ENCODE measurements at regions of chr9 and their contacts with region 1.

Region 1: GRCh38 chr9:5949103-5949699 is 58.5 kb downstream of the MLANA start:
- DNase-seq: peak in 1 of 2 donors; percentile 57
- ATAC-seq: peak; percentile 74 to 80 (median 78)
- H3K4me3 ChIP-seq: peak overlapping the region; percentile 16
- H3K4me3 Mint-ChIP-seq: peak overlapping the region; percentile 81
- H3K27ac ChIP-seq: peak overlapping the region; percentile 45
- H3K27ac Mint-ChIP-seq: peak overlapping the region; percentile 75 to 81
- H3K4me1 ChIP-seq: peaks cover 2% of the 10 kb centered on the region
- H3K4me1 Mint-ChIP-seq: peaks cover 23 to 31% of the 10 kb centered on the region in 2 donors
- H3K27me3 ChIP-seq: no peaks in the 10 kb centered on the region
- H3K27me3 Mint-ChIP-seq: no peaks in the 10 kb centered on the region
- CTCF ChIP-seq: no peak

Region 2: GRCh38 chr9:5536684-5537083 is 412.5 kb before region 1 on chr9:
- intact Hi-C with region 1: no loop called
- DNase-seq: no peak
- ATAC-seq: no peak
- H3K4me3 ChIP-seq: no peak overlapping the region
- H3K4me3 Mint-ChIP-seq: no peak overlapping the region
- H3K27ac ChIP-seq: no peak overlapping the region
- H3K27ac Mint-ChIP-seq: no peak overlapping the region
- H3K4me1 ChIP-seq: no peaks in the 10 kb centered on the region
- H3K4me1 Mint-ChIP-seq: peaks cover 4% of the 10 kb centered on the region in 2 donors
- H3K27me3 ChIP-seq: no peaks in the 10 kb centered on the region
- H3K27me3 Mint-ChIP-seq: peaks cover 0 to 10% of the 10 kb centered on the region in 2 donors
- CTCF ChIP-seq: no peak

Region 3: DNA sequence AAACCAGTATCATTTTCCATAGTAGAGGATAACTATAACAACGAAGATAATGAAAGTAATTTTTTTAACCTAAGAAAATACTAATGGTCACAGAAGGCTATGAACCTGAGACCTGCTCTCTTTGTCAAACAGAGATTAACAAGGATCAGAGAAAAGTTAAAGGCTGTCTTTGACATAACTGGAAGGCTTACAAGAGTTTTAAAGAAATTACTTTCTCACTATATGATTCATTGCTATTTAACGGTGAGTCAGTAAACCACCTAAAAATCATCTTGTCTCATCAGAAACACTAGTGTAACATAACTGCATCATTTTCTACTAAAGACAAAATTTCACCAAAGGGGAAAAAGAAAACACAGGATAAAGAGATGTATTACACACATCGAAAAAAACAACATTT is 39.2 kb before region 1 on chr9:
- intact Hi-C with region 1: no loop called
- DNase-seq: no peak
- ATAC-seq: no peak
- H3K4me3 ChIP-seq: no peak overlapping the region
- H3K4me3 Mint-ChIP-seq: no peak overlapping the region
- H3K27ac ChIP-seq: no peak overlapping the region
- H3K27ac Mint-ChIP-seq: no peak overlapping the region
- H3K4me1 ChIP-seq: no peaks in the 10 kb centered on the region
- H3K4me1 Mint-ChIP-seq: peaks cover 0 to 6% of the 10 kb centered on the region in 2 donors
- H3K27me3 ChIP-seq: no peaks in the 10 kb centered on the region
- H3K27me3 Mint-ChIP-seq: no peaks in the 10 kb centered on the region
- CTCF ChIP-seq: no peak

Region 4: DNA sequence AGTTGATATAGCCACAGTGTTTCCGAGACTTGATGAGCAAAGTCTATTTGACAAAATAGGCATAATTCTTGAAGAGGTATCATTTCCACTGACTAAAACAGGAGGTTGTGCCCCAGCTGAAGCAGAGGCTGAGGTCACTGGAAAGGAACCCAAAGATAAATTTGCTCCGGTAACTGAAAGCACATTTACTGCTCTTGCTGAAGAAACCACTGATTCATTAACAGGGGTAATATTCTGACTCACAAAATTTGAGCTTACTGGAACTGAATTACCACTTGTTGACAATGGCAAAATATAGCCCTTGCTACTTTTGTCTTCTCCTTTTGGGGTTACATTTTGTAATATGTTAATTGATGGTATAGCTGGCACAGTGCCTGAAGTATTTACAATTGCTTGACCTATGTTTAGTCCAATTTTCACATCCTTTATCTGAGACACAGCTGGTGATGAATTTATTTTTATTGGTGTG is 28.3 kb before region 1 on chr9:
- intact Hi-C with region 1: loop called (anchors 2 kb)
- DNase-seq: no peak
- ATAC-seq: peak in 1 of 3 donors; percentile 25
- H3K4me3 ChIP-seq: no peak overlapping the region
- H3K4me3 Mint-ChIP-seq: peak overlapping the region; percentile 73
- H3K27ac ChIP-seq: no peak overlapping the region
- H3K27ac Mint-ChIP-seq: peak overlapping the region; percentile 77 to 81
- H3K4me1 ChIP-seq: peaks cover 19% of the 10 kb centered on the region
- H3K4me1 Mint-ChIP-seq: peaks cover 45 to 46% of the 10 kb centered on the region in 2 donors
- H3K27me3 ChIP-seq: no peaks in the 10 kb centered on the region
- H3K27me3 Mint-ChIP-seq: no peaks in the 10 kb centered on the region
- CTCF ChIP-seq: no peak

Region 5: DNA sequence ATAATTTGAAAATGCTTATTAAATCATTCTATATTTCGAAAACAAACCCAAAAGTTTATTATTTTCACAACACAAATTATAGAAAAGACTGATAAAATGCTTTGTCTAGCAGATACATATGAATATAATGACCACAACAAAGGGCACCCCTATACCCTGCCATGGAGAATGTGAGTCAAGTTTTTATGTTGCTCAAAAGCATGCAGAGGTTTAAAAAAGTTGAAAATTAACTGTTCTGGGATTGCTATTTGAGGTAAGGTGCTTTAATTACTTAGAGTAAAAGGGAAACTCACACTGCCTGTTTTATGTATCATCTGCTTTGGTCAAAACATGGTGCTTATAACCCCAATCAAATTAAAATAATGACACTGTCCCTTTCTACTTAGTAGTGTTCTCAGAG is 17.5 kb before region 1 on chr9:
- intact Hi-C with region 1: no loop called
- DNase-seq: no peak
- ATAC-seq: no peak
- H3K4me3 ChIP-seq: no peak overlapping the region
- H3K4me3 Mint-ChIP-seq: no peak overlapping the region
- H3K27ac ChIP-seq: no peak overlapping the region
- H3K27ac Mint-ChIP-seq: no peak overlapping the region
- H3K4me1 ChIP-seq: no peaks in the 10 kb centered on the region
- H3K4me1 Mint-ChIP-seq: no peaks in the 10 kb centered on the region
- H3K27me3 ChIP-seq: no peaks in the 10 kb centered on the region
- H3K27me3 Mint-ChIP-seq: no peaks in the 10 kb centered on the region
- CTCF ChIP-seq: no peak

Region 6: DNA sequence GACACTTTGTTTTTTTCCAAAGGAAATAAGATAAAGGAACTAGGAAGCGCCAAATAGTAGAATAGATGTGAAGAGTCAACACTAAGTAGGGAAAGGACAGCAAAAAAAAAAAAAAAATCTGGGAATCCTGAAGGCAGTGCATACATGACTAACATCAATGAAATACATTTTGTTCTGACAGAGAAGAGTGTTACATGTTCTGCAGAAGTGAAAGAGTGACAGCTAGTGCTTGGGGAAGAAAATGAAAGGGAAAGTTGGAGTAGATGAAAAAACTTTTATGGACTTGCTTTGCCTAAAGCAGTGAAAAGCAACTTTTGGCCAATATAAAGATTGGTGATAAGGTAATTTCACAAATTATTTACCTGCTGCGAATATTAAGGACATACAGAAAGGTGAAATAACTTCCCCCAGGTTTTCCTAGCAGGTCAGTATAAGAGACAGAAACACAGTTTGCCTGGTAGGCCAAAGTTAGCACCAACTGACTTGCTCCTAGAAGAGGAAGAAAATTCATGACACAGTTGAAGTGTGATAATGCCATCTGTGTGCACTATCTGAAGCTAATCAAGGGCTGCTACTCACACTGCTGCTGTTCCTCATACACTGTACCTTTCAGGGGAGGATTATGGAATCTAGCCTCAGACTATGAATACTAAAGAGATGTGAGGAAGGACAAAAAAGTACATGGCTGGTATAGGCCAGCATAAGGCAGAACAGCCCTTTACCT is 27.6 kb after region 1 on chr9:
- intact Hi-C with region 1: no loop called
- DNase-seq: no peak
- ATAC-seq: peak in 2 of 3 donors; percentile 63 to 69
- H3K4me3 ChIP-seq: no peak overlapping the region
- H3K4me3 Mint-ChIP-seq: no peak overlapping the region
- H3K27ac ChIP-seq: peak overlapping the region; percentile 59
- H3K27ac Mint-ChIP-seq: peak overlapping the region; percentile 74 to 82
- H3K4me1 ChIP-seq: no peaks in the 10 kb centered on the region
- H3K4me1 Mint-ChIP-seq: peaks cover 37 to 40% of the 10 kb centered on the region in 2 donors
- H3K27me3 ChIP-seq: no peaks in the 10 kb centered on the region
- H3K27me3 Mint-ChIP-seq: no peaks in the 10 kb centered on the region
- CTCF ChIP-seq: no peak

Region 7: GRCh38 chr9:6068983-6069382 is 119.8 kb after region 1 on chr9:
- intact Hi-C with region 1: loop called (anchors 2 kb)
- DNase-seq: peak in 1 of 2 donors; percentile 77
- ATAC-seq: peak; percentile 96 to 100 (median 97)
- H3K4me3 ChIP-seq: no peak overlapping the region
- H3K4me3 Mint-ChIP-seq: peak overlapping the region; percentile 79
- H3K27ac ChIP-seq: peak overlapping the region; percentile 73
- H3K27ac Mint-ChIP-seq: peak overlapping the region; percentile 69 to 87
- H3K4me1 ChIP-seq: peaks cover 17% of the 10 kb centered on the region
- H3K4me1 Mint-ChIP-seq: peaks cover 25 to 34% of the 10 kb centered on the region in 2 donors
- H3K27me3 ChIP-seq: no peaks in the 10 kb centered on the region
- H3K27me3 Mint-ChIP-seq: peaks cover 0 to 10% of the 10 kb centered on the region in 2 donors
- CTCF ChIP-seq: no peak